ENCODE measurements at regions of chr7 and their contacts with region 1.

Region 1: DNA sequence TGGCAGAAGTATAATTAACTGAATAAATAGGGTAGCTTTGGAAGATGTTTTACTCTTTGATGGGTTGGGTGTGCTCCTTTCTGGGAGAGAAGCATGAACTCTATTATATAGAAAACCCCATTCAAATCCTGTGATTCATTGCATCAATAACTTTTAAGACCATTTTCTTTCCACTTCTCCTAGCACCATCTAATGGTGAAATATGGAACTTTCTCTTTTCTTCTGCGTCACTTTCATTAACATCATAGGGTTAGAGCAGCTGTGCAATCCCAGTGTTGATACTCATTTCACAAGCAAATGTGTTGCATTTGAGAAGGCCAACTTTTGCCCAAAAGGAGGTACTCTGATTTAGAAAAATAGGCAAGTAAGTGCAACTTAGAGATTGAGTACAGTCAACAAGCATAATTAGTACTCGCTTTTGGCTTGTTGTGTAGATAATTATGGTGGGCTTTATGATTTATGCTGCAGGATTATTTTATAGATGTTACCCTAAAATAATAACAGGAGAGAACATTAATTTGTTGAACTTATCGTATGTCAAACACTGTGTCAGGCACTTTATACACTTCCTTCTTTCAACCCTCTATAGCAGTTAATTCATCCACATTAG is 92.9 kb downstream of the CPED1 start:
- DNase-seq: no peak
- H3K4me3 ChIP-seq: no peak overlapping the region
- H3K27ac ChIP-seq: peak overlapping the region in 1 of 4 donors; percentile 26
- H3K4me1 ChIP-seq: peaks cover 0 to 5% (median 1%) of the 10 kb centered on the region in 4 donors
- H3K27me3 ChIP-seq: no peaks in the 10 kb centered on the region
- CTCF ChIP-seq: peak; percentile 61 to 77 (median 72)
- EP300 ChIP-seq: no peak
- POLR2A ChIP-seq: no peak

Region 2: GRCh38 chr7:120441850-120442249 is 639.6 kb before region 1 on chr7:
- in situ Hi-C with region 1: no loop called
- intact Hi-C with region 1: no loop called
- DNase-seq: no peak
- H3K4me3 ChIP-seq: no peak overlapping the region
- H3K27ac ChIP-seq: no peak overlapping the region
- H3K4me1 ChIP-seq: no peaks in the 10 kb centered on the region
- H3K27me3 ChIP-seq: no peaks in the 10 kb centered on the region
- CTCF ChIP-seq: no peak
- EP300 ChIP-seq: no peak
- POLR2A ChIP-seq: no peak

Region 3: DNA sequence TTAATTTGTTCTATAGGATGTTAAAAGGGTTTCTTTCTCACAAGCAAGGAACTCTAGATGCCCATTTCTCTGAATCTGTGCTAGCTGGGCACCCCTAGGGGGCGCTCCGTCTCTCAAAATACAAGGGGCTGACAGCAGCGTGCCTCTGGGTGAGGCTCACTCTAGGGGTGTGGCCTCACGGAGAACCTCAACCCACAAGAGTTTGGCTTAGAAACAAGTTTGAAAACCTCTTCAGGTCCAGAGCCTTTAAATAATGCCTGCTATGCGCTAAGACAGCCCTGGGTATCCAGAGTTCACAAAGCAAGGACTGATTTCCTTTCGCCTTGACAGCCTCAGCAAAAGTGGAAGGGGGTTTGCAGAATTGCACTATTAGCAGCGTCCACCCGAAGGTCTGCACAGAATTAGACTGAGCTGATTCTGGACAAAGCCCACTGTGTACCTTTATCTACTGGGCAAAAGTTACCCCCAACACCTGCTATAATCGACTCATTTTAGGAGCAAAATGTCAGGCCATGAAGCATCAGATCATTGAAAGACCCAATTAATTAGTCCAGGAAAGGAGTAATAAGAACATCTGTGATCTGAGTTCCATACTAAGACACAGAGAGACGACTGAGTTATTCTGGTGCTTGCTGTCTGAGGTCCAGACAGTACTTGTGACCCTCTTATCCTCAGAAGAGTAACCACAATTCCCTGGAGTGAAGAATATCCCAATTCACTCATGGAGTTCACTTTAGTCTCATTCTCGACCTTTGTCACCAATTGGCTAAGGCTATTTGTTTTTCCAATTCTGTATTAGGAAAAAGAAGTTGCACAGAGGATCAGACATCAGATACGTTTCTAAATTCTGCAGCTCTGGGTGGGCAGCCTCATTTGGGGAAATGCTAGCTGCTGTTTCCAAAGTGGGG is 93.5 kb before region 1 on chr7:
- in situ Hi-C with region 1: loop called (anchors 10 to 25 kb)
- intact Hi-C with region 1: loop called (anchors 2 kb)
- DNase-seq: peak; percentile 92
- H3K4me3 ChIP-seq: peak overlapping the region; percentile 16 to 52 (median 32)
- H3K27ac ChIP-seq: peak overlapping the region; percentile 80 to 89 (median 86)
- H3K4me1 ChIP-seq: peaks cover 0 to 24% (median 4%) of the 10 kb centered on the region in 4 donors
- H3K27me3 ChIP-seq: no peaks in the 10 kb centered on the region
- CTCF ChIP-seq: peak; percentile 85 to 93 (median 92)
- EP300 ChIP-seq: no peak
- POLR2A ChIP-seq: no peak

Region 4: DNA sequence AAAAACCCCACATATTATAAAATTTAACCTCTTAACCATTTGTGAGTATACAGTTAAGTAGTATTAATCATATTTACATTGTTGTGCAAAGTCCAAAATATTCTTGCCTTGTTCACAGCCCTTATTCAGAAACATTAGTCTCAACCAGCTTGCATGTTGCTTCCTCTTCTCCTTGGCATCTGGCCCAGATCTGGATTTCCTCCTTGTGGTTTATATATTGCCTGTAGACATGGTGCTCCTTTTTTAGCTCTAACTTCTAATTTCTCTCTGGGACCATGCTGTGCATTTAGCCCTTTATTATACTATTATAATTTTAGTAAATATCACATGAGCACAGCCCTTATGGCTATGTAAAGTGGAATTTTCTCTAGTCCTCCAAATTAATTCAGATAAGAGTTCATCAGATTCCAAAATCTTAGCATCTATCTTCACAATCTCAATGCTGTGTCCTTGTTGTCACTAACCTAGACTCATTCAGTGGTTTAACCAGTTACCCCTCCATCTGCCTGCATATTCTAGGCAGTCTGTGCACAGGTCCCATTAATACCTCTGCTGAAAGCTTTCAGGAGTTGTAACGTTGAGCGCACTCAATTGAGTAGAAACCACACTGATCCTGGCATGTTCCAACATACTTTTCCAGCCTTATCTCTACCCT is 85.0 kb before region 1 on chr7:
- in situ Hi-C with region 1: loop called in 3 of 4 experiments (anchors 10 to 25 kb)
- intact Hi-C with region 1: no loop called
- DNase-seq: peak; percentile 78
- H3K4me3 ChIP-seq: no peak overlapping the region
- H3K27ac ChIP-seq: peak overlapping the region; percentile 54 to 89 (median 61)
- H3K4me1 ChIP-seq: peaks cover 0 to 61% (median 17%) of the 10 kb centered on the region in 4 donors
- H3K27me3 ChIP-seq: no peaks in the 10 kb centered on the region
- CTCF ChIP-seq: no peak
- EP300 ChIP-seq: no peak
- POLR2A ChIP-seq: no peak

Region 5: DNA sequence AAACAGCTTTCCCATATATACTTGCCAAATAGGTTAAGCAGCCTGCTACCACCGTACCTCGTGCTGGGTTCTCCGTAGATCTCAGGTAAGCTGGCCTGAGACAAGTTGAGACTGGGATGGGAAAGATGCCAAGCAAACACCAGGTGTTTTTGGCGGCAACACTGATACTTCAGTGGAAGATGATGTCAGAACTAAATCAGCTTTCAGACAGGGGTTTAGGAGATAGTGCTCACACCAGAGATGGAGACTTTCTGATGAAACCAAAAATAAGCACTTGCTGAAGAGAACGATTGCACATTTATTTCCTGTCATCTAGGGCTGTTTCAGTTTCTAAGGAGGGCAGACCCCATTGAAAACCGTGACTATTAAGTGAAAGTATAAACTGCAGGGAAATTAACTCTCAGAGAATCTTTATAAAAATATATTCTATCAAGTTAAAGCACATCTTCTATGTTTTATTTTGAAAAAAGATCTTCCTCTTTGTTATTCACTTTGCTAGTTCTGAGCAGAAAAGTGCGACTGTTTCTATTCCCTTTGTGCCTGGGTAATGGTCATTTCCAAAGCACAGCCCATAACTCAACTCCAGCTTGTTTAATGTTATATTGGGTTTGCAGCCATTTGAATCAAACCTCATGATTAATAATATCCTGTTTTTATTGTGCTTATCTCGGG is 57.0 kb after region 1 on chr7:
- in situ Hi-C with region 1: no loop called
- intact Hi-C with region 1: no loop called
- DNase-seq: peak; percentile 14
- H3K4me3 ChIP-seq: no peak overlapping the region
- H3K27ac ChIP-seq: no peak overlapping the region
- H3K4me1 ChIP-seq: no peaks in the 10 kb centered on the region
- H3K27me3 ChIP-seq: no peaks in the 10 kb centered on the region
- CTCF ChIP-seq: no peak
- EP300 ChIP-seq: no peak
- POLR2A ChIP-seq: no peak

Region 6: DNA sequence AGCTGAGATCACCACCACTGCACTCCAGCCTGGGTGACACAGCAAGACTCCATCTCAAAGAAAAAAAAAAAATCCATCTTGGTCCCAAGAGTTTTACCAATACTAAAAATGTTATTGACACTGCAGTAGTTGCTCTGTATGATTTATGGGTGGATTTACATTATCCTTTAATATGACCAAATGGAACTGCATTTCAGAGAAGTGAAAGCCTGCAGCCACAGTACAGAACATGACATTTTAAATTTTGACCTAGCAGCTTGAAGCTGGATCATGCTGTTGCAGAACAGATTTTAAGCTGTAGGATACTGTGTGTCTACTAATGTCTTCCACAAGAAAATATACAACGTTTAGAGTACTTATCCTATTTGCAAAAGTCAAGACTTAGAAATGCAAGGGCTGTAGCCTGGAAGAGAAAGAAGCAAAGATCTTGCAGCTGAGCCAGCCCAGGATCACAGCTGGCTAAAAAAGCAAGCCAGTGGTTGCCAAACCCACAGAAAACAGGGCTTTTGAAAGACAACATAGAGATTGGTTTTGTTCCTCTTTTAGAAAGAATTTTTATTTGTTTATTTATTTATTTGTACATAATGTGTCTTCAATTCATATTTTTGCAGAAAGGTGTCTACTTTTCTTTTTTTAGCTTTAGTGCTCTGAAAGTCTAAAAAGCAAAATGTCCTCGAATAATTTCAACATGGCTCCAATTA is 192.2 kb after region 1 on chr7:
- in situ Hi-C with region 1: no loop called
- intact Hi-C with region 1: no loop called
- DNase-seq: no peak
- H3K4me3 ChIP-seq: no peak overlapping the region
- H3K27ac ChIP-seq: no peak overlapping the region
- H3K4me1 ChIP-seq: peaks cover 0 to 9% (median 3%) of the 10 kb centered on the region in 4 donors
- H3K27me3 ChIP-seq: no peaks in the 10 kb centered on the region
- CTCF ChIP-seq: no peak
- EP300 ChIP-seq: no peak
- POLR2A ChIP-seq: no peak

Measured in transverse colon (tissue), 4 donors.